ENCODE measurements at regions of chr5 and their contacts with region 1.

Region 1: GRCh38 chr5:139482050-139482889 is at the start of gene STING1:
- DNase-seq: peak; percentile 67
- H3K4me3 Mint-ChIP-seq: peak within 1 kb of the TSS; percentile 96
- H3K27ac Mint-ChIP-seq: peak within 1 kb of the TSS; percentile 98
- H3K4me1 Mint-ChIP-seq: peaks cover 45% of the 10 kb centered on the region
- H3K27me3 Mint-ChIP-seq: no peaks in the 10 kb centered on the region
- total RNA-seq, gene STING1: 277 to 281 TPM

Region 2: DNA sequence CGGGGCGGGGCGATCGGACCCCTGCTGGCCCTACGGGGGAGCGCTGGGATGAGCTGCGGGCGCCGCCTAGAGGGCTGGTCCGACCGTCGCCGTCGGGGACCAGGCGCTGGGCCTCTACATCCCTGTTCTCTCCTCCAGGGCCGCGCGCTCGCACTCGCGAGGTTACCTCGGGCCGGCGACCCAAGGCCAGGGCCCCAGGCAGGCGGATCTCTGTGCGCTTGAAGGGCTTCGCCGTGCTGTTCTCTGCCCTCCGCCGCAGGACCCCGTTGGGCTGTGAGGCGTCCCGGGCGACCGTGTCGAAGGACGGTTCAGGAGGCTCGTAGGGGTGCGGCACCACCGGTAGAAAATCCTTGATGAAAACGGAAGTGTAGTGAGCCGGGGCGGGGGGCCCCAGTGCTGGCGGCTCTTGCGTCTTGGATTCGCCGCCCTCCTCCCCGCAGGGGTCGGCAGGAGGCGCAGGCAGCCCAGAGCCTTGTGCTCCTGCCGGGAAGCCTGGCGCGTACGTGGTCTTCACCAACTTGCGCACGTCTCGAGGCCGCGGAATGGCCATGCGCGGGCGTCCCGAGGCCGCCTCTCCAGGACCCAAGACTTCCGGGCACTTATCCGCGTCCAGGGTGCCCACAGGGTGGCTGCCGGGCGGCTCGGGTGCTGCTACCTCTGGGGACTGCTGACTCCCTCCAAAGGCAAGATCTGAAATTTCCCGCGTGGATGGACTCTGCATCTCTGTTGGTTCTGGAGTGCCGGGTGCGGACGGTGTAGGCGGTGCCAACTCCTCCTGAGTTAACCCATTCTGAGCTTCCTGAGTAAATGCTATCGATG is 89.4 kb before region 1 on chr5:
- CTCF ChIA-PET with region 1: interaction called, 5 read pairs
- POLR2A ChIA-PET with region 1: interaction called, 21 read pairs
- DNase-seq: peak; percentile 92
- H3K4me3 Mint-ChIP-seq: peak overlapping the region; percentile 99
- H3K27ac Mint-ChIP-seq: peak overlapping the region; percentile 90
- H3K4me1 Mint-ChIP-seq: peaks cover 65% of the 10 kb centered on the region
- H3K27me3 Mint-ChIP-seq: no peaks in the 10 kb centered on the region

Region 3: GRCh38 chr5:139422307-139422893 is 59.9 kb before region 1 on chr5:
- CTCF ChIA-PET with region 1: interaction called, 23 read pairs
- POLR2A ChIA-PET with region 1: interaction called, 23 read pairs
- DNase-seq: peak; percentile 59
- H3K4me3 Mint-ChIP-seq: no peak overlapping the region
- H3K27ac Mint-ChIP-seq: peak overlapping the region; percentile 36
- H3K4me1 Mint-ChIP-seq: peaks cover 46% of the 10 kb centered on the region
- H3K27me3 Mint-ChIP-seq: no peaks in the 10 kb centered on the region

Region 4: DNA sequence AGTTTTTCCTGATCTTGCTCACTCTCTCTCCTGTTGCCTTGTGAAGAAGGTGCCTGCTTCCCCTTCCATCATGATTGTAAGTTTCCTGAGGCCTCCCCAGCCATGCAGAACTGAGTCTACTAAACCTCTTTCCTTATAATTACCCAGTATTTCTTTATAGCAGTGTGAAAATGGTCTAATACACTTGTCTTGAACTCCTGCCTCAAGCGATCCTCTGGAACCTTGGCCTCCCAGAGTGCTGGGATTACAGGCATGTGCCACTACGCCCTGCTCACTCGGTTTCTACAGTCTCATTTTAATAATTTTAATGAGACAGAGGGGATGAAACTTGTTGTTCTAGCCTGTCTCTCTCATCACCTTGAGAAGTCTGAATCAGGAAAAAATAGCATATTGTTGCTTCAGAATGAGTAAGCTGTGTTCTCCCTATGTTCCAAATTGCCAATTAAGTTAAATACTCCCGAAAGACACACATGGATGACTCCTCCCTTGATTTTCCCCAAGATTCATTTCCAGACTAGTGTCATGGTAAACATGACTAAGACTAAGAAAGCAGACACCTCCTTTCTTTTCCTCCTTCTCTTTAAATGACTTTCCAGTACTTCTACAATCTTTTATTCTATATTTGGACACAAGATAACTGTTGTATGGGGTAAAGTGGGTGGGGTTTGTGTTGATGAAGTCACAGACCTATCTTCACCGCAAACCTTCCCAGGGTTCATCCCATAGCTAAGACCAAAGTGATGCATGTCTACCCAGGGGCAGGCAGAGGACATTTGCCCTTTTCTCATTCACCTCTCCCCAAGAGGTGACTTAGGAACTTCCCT is 35.1 kb before region 1 on chr5:
- CTCF ChIA-PET with region 1: interaction called, 9 read pairs
- POLR2A ChIA-PET with region 1: interaction called, 32 read pairs
- DNase-seq: peak; percentile 48
- H3K4me3 Mint-ChIP-seq: no peak overlapping the region
- H3K27ac Mint-ChIP-seq: peak overlapping the region; percentile 74
- H3K4me1 Mint-ChIP-seq: peaks cover 68% of the 10 kb centered on the region
- H3K27me3 Mint-ChIP-seq: no peaks in the 10 kb centered on the region

Region 5: GRCh38 chr5:139492700-139493192 is 10.5 kb after region 1 on chr5:
- CTCF ChIA-PET with region 1: interaction called, 7 read pairs
- POLR2A ChIA-PET with region 1: interaction called, 22 read pairs
- DNase-seq: no peak
- H3K4me3 Mint-ChIP-seq: no peak overlapping the region
- H3K27ac Mint-ChIP-seq: no peak overlapping the region
- H3K4me1 Mint-ChIP-seq: peaks cover 32% of the 10 kb centered on the region
- H3K27me3 Mint-ChIP-seq: no peaks in the 10 kb centered on the region

Region 6: GRCh38 chr5:139512786-139513390 is 30.6 kb after region 1 on chr5:
- CTCF ChIA-PET with region 1: interaction called, 46 read pairs
- POLR2A ChIA-PET with region 1: interaction called, 41 read pairs
- DNase-seq: no peak
- H3K4me3 Mint-ChIP-seq: no peak overlapping the region
- H3K27ac Mint-ChIP-seq: no peak overlapping the region
- H3K4me1 Mint-ChIP-seq: peaks cover 60% of the 10 kb centered on the region
- H3K27me3 Mint-ChIP-seq: no peaks in the 10 kb centered on the region

Region 7: DNA sequence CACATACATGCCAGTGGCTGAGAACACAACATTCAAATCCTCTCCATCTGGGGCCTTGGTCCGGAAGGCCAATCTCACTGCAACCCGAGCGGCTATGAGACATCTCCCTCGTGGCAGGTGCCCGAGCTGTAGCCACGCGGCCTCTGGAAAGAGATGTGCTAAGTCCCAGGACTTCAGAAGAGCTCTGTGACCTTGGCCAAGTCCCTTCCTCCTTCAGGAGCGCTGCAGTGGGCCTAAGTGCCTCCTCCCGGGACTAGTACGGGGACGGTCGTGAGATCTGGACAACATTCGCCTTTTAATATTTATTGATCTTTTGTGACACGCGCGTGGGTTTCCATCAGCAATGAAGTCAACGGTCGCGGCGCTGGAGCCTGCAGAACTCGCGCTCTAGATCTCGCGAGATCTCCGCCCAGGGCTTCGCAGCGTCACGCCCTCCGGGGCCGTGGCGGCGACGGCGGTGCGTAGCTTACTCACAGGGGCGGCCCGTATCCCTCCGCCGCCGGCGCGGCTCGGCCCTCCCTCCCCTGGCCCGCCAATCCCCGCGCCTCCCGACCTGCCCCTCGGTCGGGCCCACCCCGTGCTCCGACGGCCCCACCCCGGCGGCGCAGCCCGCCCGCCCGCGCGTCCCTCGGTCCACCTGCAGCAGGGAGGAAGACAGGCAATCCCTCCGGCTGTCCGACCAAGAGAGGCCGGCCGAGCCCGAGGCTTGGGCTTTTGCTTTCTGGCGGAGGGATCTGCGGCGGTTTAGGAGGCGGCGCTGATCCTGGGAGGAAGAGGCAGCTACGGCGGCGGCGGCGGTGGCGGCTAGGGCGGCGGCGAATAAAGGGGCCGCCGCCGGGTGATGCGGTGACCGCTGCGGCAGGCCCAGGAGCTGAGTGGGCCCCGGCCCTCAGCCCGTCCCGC is 78.7 kb after region 1 on chr5 and contains the start of gene UBE2D2:
- CTCF ChIA-PET with region 1: interaction called, 8 read pairs
- POLR2A ChIA-PET with region 1: interaction called, 57 read pairs
- DNase-seq: peak; percentile 98
- H3K4me3 Mint-ChIP-seq: peak within 1 kb of the TSS; percentile 95
- H3K27ac Mint-ChIP-seq: peak within 1 kb of the TSS; percentile 95
- H3K4me1 Mint-ChIP-seq: peaks cover 36% of the 10 kb centered on the region
- H3K27me3 Mint-ChIP-seq: no peaks in the 10 kb centered on the region
- total RNA-seq, gene UBE2D2: 241 to 244 TPM

Measured in activated CD4-positive, alpha-beta memory T cell treated with anti-CD3 and anti-CD28 coated beads, Interleukin-2, amount 10 ng/mL, durations not matched to agents 7 days and 5 days (primary cell).